ENCODE measurements at regions of chr1 and their contacts with region 1.

Region 1: GRCh38 chr1:173202430-173203145 is 4.5 kb downstream of the TNFSF4 start:
- DNase-seq: peak; percentile 14
- ATAC-seq: no peak
- H3K4me3 Mint-ChIP-seq: no peak overlapping the region
- H3K27ac Mint-ChIP-seq: no peak overlapping the region
- H3K4me1 Mint-ChIP-seq: peaks cover 33% of the 10 kb centered on the region
- H3K27me3 Mint-ChIP-seq: peaks cover 13% of the 10 kb centered on the region

Region 2: DNA sequence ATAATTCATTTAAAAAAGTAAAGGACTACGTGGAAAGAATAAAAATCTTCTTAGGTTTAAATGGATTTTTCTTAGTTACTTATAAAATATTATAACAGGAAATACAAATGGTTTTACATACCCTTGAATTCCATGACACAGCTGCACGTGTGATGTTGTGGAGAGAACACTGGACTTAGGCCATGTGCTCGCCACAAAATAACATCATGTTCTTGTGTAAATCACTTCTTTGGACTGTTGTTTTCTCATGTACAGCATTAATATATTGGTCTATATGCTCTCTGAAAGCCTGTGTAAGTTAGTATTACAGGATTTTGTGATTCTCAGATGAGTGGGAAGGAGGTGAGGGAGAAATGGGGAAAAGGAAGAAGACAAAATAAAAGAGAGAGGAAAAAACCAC is 1133.1 kb before region 1 on chr1:
- CTCF ChIA-PET with region 1: no interaction called
- POLR2A ChIA-PET with region 1: no interaction called
- intact Hi-C with region 1: no loop called
- DNase-seq: no peak
- ATAC-seq: no peak
- H3K4me3 Mint-ChIP-seq: no peak overlapping the region
- H3K27ac Mint-ChIP-seq: no peak overlapping the region
- H3K4me1 Mint-ChIP-seq: no peaks in the 10 kb centered on the region
- H3K27me3 Mint-ChIP-seq: no peaks in the 10 kb centered on the region

Region 3: DNA sequence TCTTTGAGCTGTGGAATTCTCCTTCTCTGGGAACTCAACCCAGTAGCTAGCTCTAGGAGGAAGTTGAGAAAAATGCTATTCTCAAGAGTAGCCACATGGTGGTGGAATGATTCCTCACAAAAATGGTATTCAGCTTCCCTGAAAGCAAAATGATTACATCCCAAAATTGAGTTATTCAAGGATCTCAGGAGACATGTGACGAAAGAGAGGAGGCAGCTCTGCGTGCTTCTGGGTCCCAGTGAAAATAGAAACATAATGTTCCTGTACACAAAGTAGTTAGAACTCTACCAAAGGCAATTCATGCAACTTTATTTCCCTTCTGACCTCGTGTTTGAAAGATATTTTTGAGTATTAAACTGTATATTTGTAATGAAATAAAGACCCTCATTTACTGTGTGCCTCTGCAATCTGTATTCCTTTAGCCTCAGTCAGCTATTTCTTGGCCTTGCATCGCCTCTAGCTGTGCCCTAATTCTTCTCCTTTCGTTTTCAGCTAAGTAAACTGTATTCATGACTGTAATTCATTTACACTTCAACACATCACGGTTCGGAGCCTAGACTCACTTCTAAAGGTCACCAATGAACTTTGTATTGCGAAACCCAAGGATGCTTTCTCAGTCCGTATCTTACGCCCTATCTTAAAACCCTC is 376.4 kb before region 1 on chr1:
- CTCF ChIA-PET with region 1: interaction called, 26 read pairs
- POLR2A ChIA-PET with region 1: interaction called, 3 read pairs
- intact Hi-C with region 1: loop called in 1 of 2 experiments (anchors 2 kb)
- DNase-seq: no peak
- ATAC-seq: peak; percentile 30
- H3K4me3 Mint-ChIP-seq: no peak overlapping the region
- H3K27ac Mint-ChIP-seq: no peak overlapping the region
- H3K4me1 Mint-ChIP-seq: no peaks in the 10 kb centered on the region
- H3K27me3 Mint-ChIP-seq: peaks cover 14% of the 10 kb centered on the region

Region 4: GRCh38 chr1:173330149-173330951 is 127.8 kb after region 1 on chr1:
- CTCF ChIA-PET with region 1: no interaction called
- POLR2A ChIA-PET with region 1: no interaction called
- intact Hi-C with region 1: loop called in 1 of 2 experiments (anchors 5 kb)
- DNase-seq: no peak
- ATAC-seq: no peak
- H3K4me3 Mint-ChIP-seq: no peak overlapping the region
- H3K27ac Mint-ChIP-seq: no peak overlapping the region
- H3K4me1 Mint-ChIP-seq: peaks cover 29% of the 10 kb centered on the region
- H3K27me3 Mint-ChIP-seq: no peaks in the 10 kb centered on the region

Region 5: DNA sequence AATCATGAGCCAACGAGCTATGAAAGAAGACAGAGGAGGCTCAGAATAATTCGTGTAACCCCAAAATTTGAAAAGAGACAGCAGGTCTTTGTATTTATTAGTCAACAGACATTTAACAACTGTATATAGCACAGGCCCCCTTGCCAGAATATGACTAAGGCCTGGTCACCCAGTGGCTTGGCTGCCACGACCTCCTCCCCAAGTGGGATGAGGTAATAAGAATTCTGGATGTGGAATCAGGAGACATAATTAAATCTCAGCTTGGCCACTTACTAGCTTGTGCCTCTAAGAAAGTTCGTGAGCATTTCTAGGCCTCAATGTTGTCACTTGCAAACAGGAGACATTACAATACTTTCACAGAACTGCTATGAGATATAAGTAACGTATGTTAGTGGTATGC is 138.7 kb after region 1 on chr1:
- CTCF ChIA-PET with region 1: no interaction called
- POLR2A ChIA-PET with region 1: no interaction called
- intact Hi-C with region 1: no loop called
- DNase-seq: no peak
- ATAC-seq: no peak
- H3K4me3 Mint-ChIP-seq: no peak overlapping the region
- H3K27ac Mint-ChIP-seq: no peak overlapping the region
- H3K4me1 Mint-ChIP-seq: no peaks in the 10 kb centered on the region
- H3K27me3 Mint-ChIP-seq: no peaks in the 10 kb centered on the region